HEK293T (cell line): ENCODE measurements at regions of chr1 and their contacts with region 1.

Region 1: DNA sequence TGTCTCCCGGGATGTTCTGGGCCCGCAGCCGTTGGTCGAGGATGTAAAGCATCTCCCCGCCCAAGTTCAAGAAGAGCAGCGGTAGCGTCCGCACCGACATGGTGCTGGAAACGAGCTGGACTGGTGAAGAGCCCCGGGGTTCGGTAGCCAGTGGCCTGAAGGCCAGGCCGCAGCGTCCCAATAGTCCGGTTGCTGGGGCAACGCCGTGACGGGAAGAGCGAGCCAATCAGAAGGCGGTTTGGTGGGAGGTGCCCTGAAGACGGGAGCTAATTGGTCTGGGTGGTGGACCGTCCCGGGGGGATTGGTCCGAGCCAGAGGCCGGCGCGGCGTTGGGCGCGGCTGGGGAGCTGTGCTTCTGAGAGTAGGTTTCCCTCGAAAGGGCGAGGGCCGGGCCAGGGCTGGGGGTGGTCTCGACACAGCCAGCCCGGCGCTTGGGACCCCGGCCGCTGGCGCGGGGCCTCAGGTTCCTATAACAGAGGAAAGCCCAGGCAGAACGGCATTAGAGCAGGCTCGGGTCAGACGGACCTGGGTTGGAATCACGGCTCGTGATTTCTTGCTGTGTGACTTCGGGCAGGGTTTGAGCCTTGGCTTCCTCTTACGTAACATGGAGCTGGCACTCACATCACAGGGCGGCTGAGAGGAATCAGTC is at the start of gene OSCP1:
- DNase-seq: peak; percentile 98

Region 2: DNA sequence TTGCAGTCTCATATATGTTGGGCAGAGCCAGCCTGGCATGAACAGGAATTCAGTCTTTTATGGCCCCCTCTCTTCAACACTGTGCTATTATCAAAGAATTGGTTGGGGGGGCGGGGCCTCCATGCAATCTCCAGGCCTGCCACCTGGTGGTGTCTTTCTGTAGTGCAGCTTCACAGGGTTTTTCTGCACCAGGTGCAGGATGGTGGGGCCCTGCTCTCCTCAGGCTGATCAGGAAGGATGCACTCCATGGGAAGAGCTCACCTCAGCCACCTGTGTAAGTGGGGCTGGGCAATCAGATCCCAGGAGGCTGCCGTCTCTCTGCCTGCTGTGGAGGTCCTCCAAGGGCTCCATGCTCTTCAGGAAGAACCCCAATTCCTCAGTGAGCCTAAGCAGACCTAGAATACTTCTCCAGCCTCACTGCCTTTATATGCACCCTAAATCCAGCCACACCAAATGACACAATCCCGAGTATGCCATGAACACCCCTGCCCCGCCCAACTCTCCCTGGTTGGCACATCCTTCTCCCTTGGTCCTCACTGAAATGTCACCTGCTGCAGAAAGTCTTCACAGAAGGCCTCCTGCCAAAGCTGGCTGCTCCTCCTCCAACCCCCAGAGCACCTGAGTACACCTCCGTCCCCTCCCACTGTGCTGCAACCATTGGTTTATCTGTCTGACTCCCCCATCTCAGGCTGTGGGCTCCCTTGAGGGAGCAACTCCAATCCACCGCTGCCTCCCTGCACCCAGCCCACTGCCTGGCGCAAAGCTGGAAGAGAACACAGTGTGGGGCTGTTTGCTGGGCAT is 81.1 kb before region 1 on chr1:
- CTCF ChIA-PET with region 1: no interaction called
- POLR2A ChIA-PET with region 1: no interaction called
- DNase-seq: peak; percentile 85

Region 3: DNA sequence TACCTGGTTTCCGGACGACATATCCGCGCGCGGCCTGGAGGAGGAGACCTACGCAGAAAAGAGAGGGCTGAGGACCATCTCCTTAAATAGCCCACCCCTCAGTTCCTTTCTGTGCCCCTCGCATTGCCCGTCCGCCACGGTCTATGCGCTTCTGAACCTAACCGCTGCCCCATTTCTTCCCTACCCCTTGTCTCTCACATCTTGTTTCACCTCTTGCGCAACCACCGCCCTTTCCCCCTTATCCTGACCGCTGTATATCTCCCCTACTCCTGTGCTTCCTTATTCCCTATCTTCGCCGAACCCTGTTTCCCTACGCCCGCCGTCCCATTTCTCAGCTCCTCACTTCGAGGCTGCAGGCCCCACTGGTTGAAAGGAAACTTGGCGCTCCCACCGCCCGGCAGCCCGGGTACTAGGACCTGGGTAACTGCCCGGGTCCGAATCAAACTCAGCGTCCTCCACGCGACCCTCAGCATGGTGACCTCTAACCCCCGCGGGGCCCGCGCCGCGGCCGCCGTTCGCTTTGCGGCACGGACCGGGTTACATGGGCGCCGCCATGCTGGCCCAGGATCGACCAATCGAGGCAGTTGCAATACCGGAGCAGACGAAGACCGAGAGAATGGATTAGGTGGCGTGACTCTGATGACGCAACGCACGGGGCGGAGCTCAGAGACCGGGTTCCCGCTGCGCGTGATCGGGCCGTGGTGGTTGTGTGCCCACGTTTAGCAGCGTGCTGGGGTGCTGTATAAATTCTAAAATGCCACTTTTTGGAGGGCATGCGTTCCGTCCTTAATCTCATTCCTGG is 13.6 kb after region 1 on chr1 and contains the start of gene MRPS15:
- CTCF ChIA-PET with region 1: interaction called, 3 read pairs
- POLR2A ChIA-PET with region 1: interaction called, 77 read pairs
- DNase-seq: peak; percentile 94